Dorsolateral prefrontal cortex (tissue), 120 donors: ENCODE measurements at regions of chr18 and their contacts with region 1.

Region 1: DNA sequence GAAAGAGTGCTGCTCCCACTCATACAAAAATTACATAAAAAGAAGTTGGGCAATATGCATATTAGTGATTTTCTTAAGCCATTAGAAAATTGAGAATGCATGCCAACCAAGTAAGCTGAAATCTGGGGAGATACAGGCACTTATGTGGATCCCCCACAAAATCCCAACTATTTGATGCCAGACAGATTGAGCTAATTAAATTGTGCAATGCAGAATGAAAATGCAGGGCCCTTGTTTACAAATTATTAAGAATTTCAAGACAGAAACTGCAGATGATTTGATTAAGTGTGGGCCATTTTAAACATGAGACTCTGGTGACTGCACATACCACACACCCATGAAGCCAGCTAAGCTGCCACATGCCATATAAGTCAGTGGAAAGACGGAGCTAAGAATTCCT is 554.5 kb downstream of the CBLN2 start:
- DNase-seq: no peak
- H3K4me3 ChIP-seq: no peak overlapping the region
- H3K27ac ChIP-seq: no peak overlapping the region
- H3K27me3 ChIP-seq: no peaks in the 10 kb centered on the region
- CTCF ChIP-seq: no peak

Region 2: GRCh38 chr18:70956554-70956953 is 1033.1 kb before region 1 on chr18:
- intact Hi-C with region 1: loop called in 1 of 2 experiments (anchors 5 kb)
- DNase-seq: no peak
- H3K4me3 ChIP-seq: no peak overlapping the region
- H3K27ac ChIP-seq: no peak overlapping the region
- H3K27me3 ChIP-seq: peaks cover 0 to 3% (median 0%) of the 10 kb centered on the region in 45 donors
- CTCF ChIP-seq: no peak

Region 3: GRCh38 chr18:72283148-72283925 is 293.7 kb after region 1 on chr18:
- intact Hi-C with region 1: no loop called
- DNase-seq: no peak
- H3K4me3 ChIP-seq: no peak overlapping the region
- H3K27ac ChIP-seq: no peak overlapping the region
- H3K27me3 ChIP-seq: no peaks in the 10 kb centered on the region
- CTCF ChIP-seq: no peak